Spleen (tissue), 13 donors: ENCODE measurements at regions of chr14 and their contacts with region 1.

Region 1: GRCh38 chr14:69242311-69243224 is 17.4 kb upstream of the GALNT16 start:
- DNase-seq: no peak
- H3K4me3 ChIP-seq: no peak overlapping the region
- H3K27ac ChIP-seq: no peak overlapping the region
- H3K4me1 ChIP-seq: peaks cover 0 to 8% (median 7%) of the 10 kb centered on the region in 6 donors
- H3K27me3 ChIP-seq: no peaks in the 10 kb centered on the region
- CTCF ChIP-seq: peak; percentile 64 to 86 (median 78)
- POLR2A ChIP-seq: no peak

Region 2: GRCh38 chr14:69363055-69363454 is 120.5 kb after region 1 on chr14:
- intact Hi-C with region 1: loop called (anchors 10 kb)
- DNase-seq: no peak
- H3K4me3 ChIP-seq: no peak overlapping the region
- H3K27ac ChIP-seq: no peak overlapping the region
- H3K4me1 ChIP-seq: peaks cover 0 to 5% (median 0%) of the 10 kb centered on the region in 6 donors
- H3K27me3 ChIP-seq: no peaks in the 10 kb centered on the region
- CTCF ChIP-seq: peak in 6 of 11 experiments; percentile 20 to 51 (median 26)
- POLR2A ChIP-seq: no peak

Region 3: DNA sequence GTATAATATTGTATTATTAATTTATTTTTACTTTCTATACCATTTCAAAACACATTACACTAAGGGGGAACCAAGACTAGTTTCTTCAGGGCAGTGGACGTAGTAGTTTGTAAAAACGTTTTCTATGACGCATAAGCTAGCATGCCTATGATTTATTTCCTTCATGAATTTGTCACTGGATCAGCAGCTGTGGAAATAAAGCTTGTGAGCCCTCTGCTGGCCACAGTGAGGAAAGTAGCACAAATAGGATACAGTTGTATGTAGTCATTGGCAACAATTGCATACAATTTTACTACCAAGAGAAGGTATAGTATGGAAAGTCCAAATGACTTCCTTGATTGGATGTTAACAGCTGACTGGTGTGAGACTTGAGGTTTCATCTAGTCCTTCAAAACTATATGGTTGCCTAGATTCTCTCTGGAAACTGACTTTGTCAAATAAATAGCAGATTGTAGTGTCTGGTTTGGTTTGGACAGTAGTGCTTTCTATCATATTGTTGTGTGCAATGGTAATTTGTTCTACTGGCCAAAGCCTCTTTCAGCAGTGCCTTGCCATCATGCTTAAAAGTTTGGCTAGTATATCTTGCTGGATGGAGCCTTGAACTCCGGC is 217.6 kb after region 1 on chr14:
- intact Hi-C with region 1: loop called (anchors 2 kb)
- DNase-seq: no peak
- H3K4me3 ChIP-seq: no peak overlapping the region
- H3K27ac ChIP-seq: no peak overlapping the region
- H3K4me1 ChIP-seq: no peaks in the 10 kb centered on the region
- H3K27me3 ChIP-seq: no peaks in the 10 kb centered on the region
- CTCF ChIP-seq: peak; percentile 50 to 86 (median 75)
- POLR2A ChIP-seq: no peak

Region 4: DNA sequence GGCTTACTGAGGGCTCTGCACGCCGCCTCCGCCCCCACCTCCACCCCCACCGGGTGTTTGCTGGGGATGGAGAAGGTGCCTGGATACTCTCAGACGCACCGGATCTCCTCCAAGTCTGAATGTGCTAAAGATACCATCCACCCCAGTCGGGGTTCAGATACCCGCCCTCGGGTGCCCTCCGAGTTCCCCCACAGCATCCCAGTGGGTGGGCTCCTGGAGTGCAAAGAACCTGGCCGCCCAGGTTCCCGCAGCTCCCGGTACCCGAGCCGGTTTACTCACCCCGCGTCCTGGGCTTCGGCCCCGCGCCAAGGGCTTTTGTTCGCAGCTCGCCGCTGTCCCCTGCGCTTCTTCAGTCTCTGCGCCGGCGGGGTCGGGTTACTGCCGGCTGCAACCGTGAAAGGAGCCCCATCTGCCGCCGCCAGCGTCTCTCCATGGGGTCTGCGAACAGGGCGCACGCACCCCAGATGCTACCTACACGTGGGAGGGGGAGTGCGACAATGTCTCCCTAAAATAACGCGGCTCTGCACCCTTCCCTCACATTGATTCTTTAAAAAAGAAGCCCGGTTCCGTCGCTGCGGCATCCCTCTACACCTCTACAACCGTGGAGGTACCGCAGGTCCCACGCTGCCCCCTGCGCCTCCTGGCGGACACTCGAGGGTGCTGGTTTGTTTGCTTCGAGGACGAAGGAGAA is 331.8 kb after region 1 on chr14 and contains the start of gene CCDC177:
- intact Hi-C with region 1: loop called (anchors 10 kb)
- DNase-seq: peak; percentile 89
- H3K4me3 ChIP-seq: peak within 1 kb of the TSS; percentile 1 to 69 (median 32)
- H3K27ac ChIP-seq: no peak within 1 kb of the TSS
- H3K4me1 ChIP-seq: peaks cover 13 to 42% (median 37%) of the 10 kb centered on the region in 6 donors
- H3K27me3 ChIP-seq: peaks cover 5 to 92% (median 66%) of the 10 kb centered on the region in 7 donors
- CTCF ChIP-seq: peak; percentile 33 to 83 (median 64)
- POLR2A ChIP-seq: no peak
- total RNA-seq, gene CCDC177: not detected